ENCODE measurements at regions of chr19 and their contacts with region 1.

Region 1: DNA sequence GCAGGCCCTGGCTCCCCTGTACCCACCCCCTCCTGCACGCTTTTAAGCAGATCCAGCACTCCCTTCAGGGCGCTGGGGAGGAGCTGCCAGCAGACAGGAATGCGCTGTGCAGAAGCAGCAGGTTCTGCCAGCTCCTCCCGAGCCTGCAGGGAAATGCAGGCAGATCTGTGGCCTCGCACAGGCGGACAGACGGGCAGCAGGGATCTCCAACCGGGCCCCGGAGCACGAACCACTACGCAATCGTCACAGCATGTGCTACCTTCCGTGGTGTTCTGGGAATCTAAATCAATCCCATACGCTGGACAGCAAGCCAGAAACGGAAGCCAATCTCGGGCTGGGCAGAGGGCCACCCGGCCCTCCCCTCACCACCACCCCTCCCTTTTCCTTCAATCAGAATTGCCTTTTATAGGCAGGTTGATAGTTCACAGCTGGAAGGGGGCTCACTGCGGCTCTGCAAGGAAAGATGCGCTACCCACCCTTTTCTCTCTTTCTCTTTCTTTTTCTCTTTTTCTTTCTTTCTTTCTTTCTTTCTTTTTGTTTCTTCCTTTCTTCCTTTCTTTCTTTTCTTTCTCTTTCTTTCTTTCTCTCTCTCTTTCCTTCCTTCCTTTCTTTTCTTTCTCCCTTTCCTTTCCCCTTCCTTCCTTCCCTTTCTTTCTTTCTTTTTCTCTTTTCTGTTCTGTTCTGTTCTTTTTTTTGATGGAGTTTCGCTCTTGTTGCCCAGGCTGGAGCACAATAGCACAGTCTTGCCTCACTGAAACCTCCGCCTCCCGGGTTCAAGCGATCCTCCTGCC is 99.9 kb downstream of the GNG7 start:
- DNase-seq: no peak
- ATAC-seq: no peak
- H3K4me3 ChIP-seq: no peak overlapping the region
- H3K4me3 Mint-ChIP-seq: no peak overlapping the region
- H3K27ac ChIP-seq: no peak overlapping the region
- H3K27ac Mint-ChIP-seq: no peak overlapping the region
- H3K4me1 ChIP-seq: peaks cover 19% of the 10 kb centered on the region
- H3K4me1 Mint-ChIP-seq: peaks cover 13% of the 10 kb centered on the region
- H3K27me3 ChIP-seq: no peaks in the 10 kb centered on the region
- H3K27me3 Mint-ChIP-seq: peaks cover under 1% of the 10 kb centered on the region
- CTCF ChIP-seq: no peak

Region 2: DNA sequence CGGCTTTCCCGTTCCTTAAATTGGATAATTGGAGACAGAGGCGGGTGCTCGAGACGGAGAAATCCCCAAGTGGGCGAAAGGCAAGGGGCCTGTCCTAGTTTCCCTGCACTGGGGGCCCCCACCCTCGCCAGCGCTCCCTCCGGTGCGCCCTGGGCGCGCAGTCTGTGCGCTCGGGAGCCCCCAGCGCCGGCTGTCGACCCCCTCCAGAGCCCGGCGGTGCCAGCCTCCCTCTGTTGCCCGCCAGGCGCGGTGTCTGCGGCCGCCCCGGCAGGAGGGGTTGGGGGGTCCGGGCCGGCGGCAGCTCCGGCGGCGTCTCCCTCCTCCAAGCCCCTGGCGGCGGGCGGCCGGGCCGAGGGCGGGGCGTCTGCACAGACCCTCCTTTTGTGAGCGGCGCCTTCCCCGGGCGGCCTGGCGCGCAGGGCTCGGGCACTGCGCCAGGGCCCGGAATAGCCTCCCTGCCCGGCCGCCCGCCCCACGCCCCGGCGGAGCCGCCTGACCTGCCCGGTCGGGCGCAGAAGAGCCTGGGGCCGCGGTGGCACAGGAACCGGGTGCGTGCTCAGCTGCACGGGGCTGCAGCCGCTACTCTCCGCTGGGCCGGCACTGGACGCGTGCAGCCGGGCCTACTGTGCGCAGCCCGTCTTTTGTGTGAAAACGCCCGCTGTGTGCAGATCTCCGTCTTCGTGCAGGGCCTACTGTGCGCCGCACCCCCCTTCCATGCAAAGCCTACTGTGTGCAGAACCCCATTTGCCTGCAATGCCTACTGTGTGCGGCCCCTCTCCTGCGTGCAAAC is 113.4 kb before region 1 on chr19:
- CTCF ChIA-PET with region 1: no interaction called
- POLR2A ChIA-PET with region 1: no interaction called
- intact Hi-C with region 1: no loop called
- DNase-seq: peak in 1 of 14 experiments; percentile 23
- ATAC-seq: peak; percentile 29
- H3K4me3 ChIP-seq: no peak overlapping the region
- H3K4me3 Mint-ChIP-seq: peak overlapping the region; percentile 57
- H3K27ac ChIP-seq: no peak overlapping the region
- H3K27ac Mint-ChIP-seq: no peak overlapping the region
- H3K4me1 ChIP-seq: peaks cover 31% of the 10 kb centered on the region
- H3K4me1 Mint-ChIP-seq: peaks cover 17% of the 10 kb centered on the region
- H3K27me3 ChIP-seq: peaks cover 24 to 30% of the 10 kb centered on the region in 2 experiments
- H3K27me3 Mint-ChIP-seq: peaks cover 43% of the 10 kb centered on the region
- CTCF ChIP-seq: no peak

Region 3: GRCh38 chr19:2561895-2562294 is 40.7 kb before region 1 on chr19:
- CTCF ChIA-PET with region 1: interaction called, 4 read pairs
- POLR2A ChIA-PET with region 1: interaction called, 13 read pairs
- intact Hi-C with region 1: loop called in 1 of 2 experiments (anchors 1 kb)
- DNase-seq: peak; percentile 41 to 86 (median 63)
- ATAC-seq: peak; percentile 95
- H3K4me3 ChIP-seq: peak overlapping the region; percentile 72
- H3K4me3 Mint-ChIP-seq: peak overlapping the region; percentile 95
- H3K27ac ChIP-seq: peak overlapping the region; percentile 63 to 77
- H3K27ac Mint-ChIP-seq: peak overlapping the region; percentile 94
- H3K4me1 ChIP-seq: peaks cover 20% of the 10 kb centered on the region
- H3K4me1 Mint-ChIP-seq: peaks cover 15% of the 10 kb centered on the region
- H3K27me3 ChIP-seq: no peaks in the 10 kb centered on the region
- H3K27me3 Mint-ChIP-seq: no peaks in the 10 kb centered on the region
- CTCF ChIP-seq: no peak

Region 4: GRCh38 chr19:2627319-2627829 is 24.8 kb after region 1 on chr19:
- CTCF ChIA-PET with region 1: no interaction called
- POLR2A ChIA-PET with region 1: interaction called, 29 read pairs
- intact Hi-C with region 1: no loop called
- DNase-seq: peak in 3 of 14 experiments; percentile 57 to 79 (median 68)
- ATAC-seq: peak; percentile 26
- H3K4me3 ChIP-seq: no peak overlapping the region
- H3K4me3 Mint-ChIP-seq: no peak overlapping the region
- H3K27ac ChIP-seq: peak overlapping the region in 1 of 2 donors; percentile 11
- H3K27ac Mint-ChIP-seq: peak overlapping the region; percentile 81
- H3K4me1 ChIP-seq: peaks cover 48% of the 10 kb centered on the region
- H3K4me1 Mint-ChIP-seq: peaks cover 51% of the 10 kb centered on the region
- H3K27me3 ChIP-seq: no peaks in the 10 kb centered on the region
- H3K27me3 Mint-ChIP-seq: no peaks in the 10 kb centered on the region
- CTCF ChIP-seq: no peak